ENCODE measurements at regions of chr15 and their contacts with region 1.

Region 1: DNA sequence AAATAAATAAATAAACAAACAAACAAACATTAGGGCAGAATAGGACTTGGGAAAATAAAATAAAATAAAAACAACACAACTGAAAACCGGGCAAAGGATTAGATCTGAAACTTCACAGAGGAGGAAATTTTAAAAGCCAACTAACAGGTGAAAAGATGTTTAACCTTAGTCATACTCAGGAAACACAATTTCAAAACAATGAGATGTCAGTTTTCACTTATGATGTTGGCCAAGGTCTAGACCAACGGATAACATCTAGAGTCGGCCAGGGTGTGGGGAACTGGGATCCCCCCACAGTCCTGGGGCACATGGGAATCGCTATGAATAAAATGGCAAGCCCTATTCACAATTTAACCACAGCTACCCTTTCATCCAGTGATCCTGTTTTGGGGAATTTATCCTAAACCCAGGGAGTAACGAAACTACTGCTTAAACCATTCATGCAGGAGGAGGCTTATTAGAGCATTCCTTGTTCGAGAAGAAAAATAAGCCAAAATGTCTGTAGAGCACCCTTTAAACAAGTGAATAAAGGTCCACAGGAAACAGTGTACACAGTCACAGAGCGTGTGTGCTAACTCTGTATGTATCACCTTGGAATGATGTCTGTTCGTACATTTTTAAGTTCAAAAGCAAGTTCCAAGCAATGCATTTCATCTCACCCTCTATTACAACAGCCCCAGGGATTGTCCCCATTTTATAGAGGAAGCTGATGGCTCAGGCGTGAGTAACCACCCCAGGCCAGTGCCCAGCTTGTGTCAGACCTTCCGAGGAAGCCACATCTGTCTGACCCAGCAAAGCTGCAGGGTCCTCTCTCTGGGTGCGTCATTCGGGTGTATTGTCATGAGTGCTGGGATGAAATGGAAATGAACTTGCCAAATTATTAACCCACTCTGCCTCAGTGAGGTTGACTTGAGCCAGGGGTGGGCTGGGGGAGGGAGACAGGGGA is 6.3 kb upstream of the ANPEP start:
- DNase-seq: peak in 1 of 35 experiments; percentile 21
- ATAC-seq: no peak
- H3K4me3 ChIP-seq: no peak overlapping the region
- H3K4me3 Mint-ChIP-seq: no peak overlapping the region
- H3K27ac ChIP-seq: no peak overlapping the region
- H3K27ac Mint-ChIP-seq: no peak overlapping the region
- H3K4me1 ChIP-seq: no peaks in the 10 kb centered on the region
- H3K4me1 Mint-ChIP-seq: peaks cover 0 to 4% (median 0%) of the 10 kb centered on the region in 3 donors
- H3K27me3 ChIP-seq: peaks cover 0 to 48% of the 10 kb centered on the region in 2 experiments
- H3K27me3 Mint-ChIP-seq: peaks cover 29 to 31% of the 10 kb centered on the region in 2 donors

Region 2: DNA sequence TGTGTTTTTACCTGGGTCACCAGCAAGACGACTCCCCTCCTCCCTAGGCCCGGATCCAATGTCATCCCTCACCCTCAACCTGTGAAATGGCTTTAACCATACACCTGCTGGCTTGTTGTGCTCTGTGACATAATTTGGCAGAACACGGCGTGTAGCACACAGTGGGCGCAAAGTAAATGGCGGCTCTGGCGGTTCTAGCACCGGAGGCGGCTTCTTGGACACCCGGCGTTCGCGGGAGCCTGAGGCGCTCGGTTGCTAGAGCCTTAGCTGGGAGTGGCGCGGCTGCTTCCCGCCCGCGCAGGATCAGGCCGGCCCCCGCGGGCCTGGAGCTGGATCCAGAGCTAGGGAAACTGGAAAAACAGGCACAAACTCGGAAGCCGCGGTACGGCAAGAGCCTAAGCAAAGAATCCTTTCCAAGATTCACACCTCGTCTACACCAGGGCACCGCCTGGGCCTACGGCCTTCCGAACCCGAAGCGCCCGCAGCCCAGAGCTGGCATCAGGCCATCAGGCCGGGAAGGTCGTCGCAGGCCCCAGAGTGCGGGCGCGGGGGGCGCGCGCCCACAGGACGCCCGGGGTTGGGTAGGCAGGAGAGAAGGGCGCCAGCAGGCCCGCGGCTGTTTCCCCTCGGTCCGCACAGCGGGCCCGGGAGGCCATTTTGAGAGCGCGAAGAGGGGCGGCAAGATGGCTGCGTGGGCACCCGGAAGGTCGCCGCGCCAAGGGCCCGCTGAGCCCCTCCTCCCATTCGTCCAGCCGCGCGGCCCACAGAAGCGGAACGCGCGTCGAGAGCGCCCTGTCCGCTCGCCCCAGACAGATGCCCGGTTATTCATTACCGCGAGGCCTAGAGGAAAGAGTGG is 442.4 kb before region 1 on chr15:
- CTCF ChIA-PET with region 1: no interaction called
- POLR2A ChIA-PET with region 1: no interaction called
- DNase-seq: peak in 1 of 35 experiments; percentile 38
- ATAC-seq: peak; percentile 31 to 56 (median 47)
- H3K4me3 ChIP-seq: peak overlapping the region; percentile 46 to 47
- H3K4me3 Mint-ChIP-seq: peak overlapping the region; percentile 62 to 78 (median 77)
- H3K27ac ChIP-seq: no peak overlapping the region
- H3K27ac Mint-ChIP-seq: peak overlapping the region in 1 of 2 donors; percentile 52
- H3K4me1 ChIP-seq: peaks cover 0 to 27% of the 10 kb centered on the region in 2 experiments
- H3K4me1 Mint-ChIP-seq: peaks cover 0 to 10% (median 7%) of the 10 kb centered on the region in 3 donors
- H3K27me3 ChIP-seq: peaks cover 33 to 61% of the 10 kb centered on the region in 2 experiments
- H3K27me3 Mint-ChIP-seq: peaks cover 67 to 89% of the 10 kb centered on the region in 2 donors

Region 3: GRCh38 chr15:89707577-89707976 is 113.4 kb before region 1 on chr15:
- CTCF ChIA-PET with region 1: no interaction called
- POLR2A ChIA-PET with region 1: interaction called in 1 of 2 experiments, 16 read pairs
- DNase-seq: no peak
- ATAC-seq: no peak
- H3K4me3 ChIP-seq: no peak overlapping the region
- H3K4me3 Mint-ChIP-seq: no peak overlapping the region
- H3K27ac ChIP-seq: no peak overlapping the region
- H3K27ac Mint-ChIP-seq: no peak overlapping the region
- H3K4me1 ChIP-seq: no peaks in the 10 kb centered on the region
- H3K4me1 Mint-ChIP-seq: no peaks in the 10 kb centered on the region
- H3K27me3 ChIP-seq: peaks cover 0 to 16% of the 10 kb centered on the region in 2 experiments
- H3K27me3 Mint-ChIP-seq: peaks cover 27% of the 10 kb centered on the region in 2 donors

Region 4: GRCh38 chr15:89794627-89795241 is 26.2 kb before region 1 on chr15:
- CTCF ChIA-PET with region 1: no interaction called
- POLR2A ChIA-PET with region 1: no interaction called
- DNase-seq: no peak
- ATAC-seq: no peak
- H3K4me3 ChIP-seq: no peak overlapping the region
- H3K4me3 Mint-ChIP-seq: no peak overlapping the region
- H3K27ac ChIP-seq: no peak overlapping the region
- H3K27ac Mint-ChIP-seq: no peak overlapping the region
- H3K4me1 ChIP-seq: no peaks in the 10 kb centered on the region
- H3K4me1 Mint-ChIP-seq: no peaks in the 10 kb centered on the region
- H3K27me3 ChIP-seq: peaks cover 0 to 20% of the 10 kb centered on the region in 2 experiments
- H3K27me3 Mint-ChIP-seq: peaks cover 0 to 14% of the 10 kb centered on the region in 2 donors

Region 5: DNA sequence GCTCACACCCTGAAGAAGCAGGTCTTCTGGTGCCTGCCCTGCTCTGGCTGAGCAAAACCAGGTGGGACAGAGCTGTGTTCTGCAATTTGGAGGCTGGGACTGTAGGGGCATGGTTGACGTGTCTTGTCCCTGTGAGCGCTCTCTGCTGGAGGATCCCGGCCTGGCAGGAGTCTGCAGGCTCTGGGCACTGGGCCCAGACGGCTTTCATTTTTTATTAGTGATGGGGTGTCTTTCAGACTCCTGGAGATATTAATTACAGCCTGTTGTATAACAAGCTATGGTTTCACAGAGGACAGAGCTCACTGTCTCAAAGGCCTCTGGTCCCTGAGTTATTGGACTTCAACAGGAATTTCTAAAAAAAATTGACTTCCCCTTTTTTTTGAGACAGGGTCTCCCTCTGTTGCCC is 150.7 kb after region 1 on chr15:
- CTCF ChIA-PET with region 1: no interaction called
- POLR2A ChIA-PET with region 1: no interaction called
- DNase-seq: peak in 34 of 35 experiments; percentile 1 to 58 (median 32)
- ATAC-seq: peak; percentile 69 to 91 (median 74)
- H3K4me3 ChIP-seq: no peak overlapping the region
- H3K4me3 Mint-ChIP-seq: no peak overlapping the region
- H3K27ac ChIP-seq: no peak overlapping the region
- H3K27ac Mint-ChIP-seq: no peak overlapping the region
- H3K4me1 ChIP-seq: no peaks in the 10 kb centered on the region
- H3K4me1 Mint-ChIP-seq: no peaks in the 10 kb centered on the region
- H3K27me3 ChIP-seq: peaks cover 0 to 1% of the 10 kb centered on the region in 2 experiments
- H3K27me3 Mint-ChIP-seq: peaks cover 0 to 5% of the 10 kb centered on the region in 2 donors

Measured in T-cell (primary cell).